Heart left ventricle (tissue), 16 donors: ENCODE measurements at regions of chr13 and their contacts with region 1.

Region 1: DNA sequence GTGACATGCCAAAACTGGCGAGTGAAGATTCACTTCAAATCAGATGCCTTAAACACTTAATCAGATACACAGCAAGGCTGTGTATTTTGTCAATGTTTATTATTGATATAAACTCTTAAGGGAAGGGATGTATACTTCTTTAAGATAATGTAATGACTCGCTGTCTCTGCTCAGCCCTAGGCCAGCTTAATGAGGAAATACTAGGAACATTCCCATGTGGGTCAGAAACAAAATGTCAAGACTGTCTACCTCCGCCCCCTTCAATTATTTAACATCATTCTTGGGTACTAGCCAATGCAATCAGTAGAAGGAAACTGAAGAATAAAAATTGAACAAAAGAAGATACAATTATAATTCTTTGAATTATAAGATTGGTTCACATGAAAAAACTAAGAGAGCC is 33.9 kb upstream of the SERPINE3 start:
- DNase-seq: no peak
- ATAC-seq: no peak
- H3K4me3 ChIP-seq: no peak overlapping the region
- H3K27ac ChIP-seq: no peak overlapping the region
- H3K4me1 ChIP-seq: no peaks in the 10 kb centered on the region
- H3K27me3 ChIP-seq: no peaks in the 10 kb centered on the region
- CTCF ChIP-seq: no peak
- POLR2A ChIP-seq: no peak

Region 2: GRCh38 chr13:50387051-50387581 is 918.5 kb before region 1 on chr13:
- intact Hi-C with region 1: no loop called
- DNase-seq: peak; percentile 61 to 77 (median 68)
- ATAC-seq: peak; percentile 89 to 96 (median 95)
- H3K4me3 ChIP-seq: peak overlapping the region in 10 of 12 donors; percentile 10 to 50 (median 37)
- H3K27ac ChIP-seq: peak overlapping the region in 11 of 12 donors; percentile 33 to 86 (median 69)
- H3K4me1 ChIP-seq: peaks cover 0 to 20% (median 2%) of the 10 kb centered on the region in 12 donors
- H3K27me3 ChIP-seq: no peaks in the 10 kb centered on the region
- CTCF ChIP-seq: peak in 11 of 12 donors; percentile 8 to 53 (median 23)
- POLR2A ChIP-seq: no peak

Region 3: GRCh38 chr13:51764184-51765141 is 458.9 kb after region 1 on chr13:
- intact Hi-C with region 1: loop called in 1 of 10 experiments (anchors 5 kb)
- DNase-seq: peak; percentile 65 to 83 (median 72)
- ATAC-seq: peak; percentile 81 to 93 (median 86)
- H3K4me3 ChIP-seq: peak overlapping the region in 3 of 12 donors; percentile 5 to 26 (median 21)
- H3K27ac ChIP-seq: peak overlapping the region; percentile 39 to 92 (median 72)
- H3K4me1 ChIP-seq: peaks cover 0 to 35% (median 29%) of the 10 kb centered on the region in 12 donors
- H3K27me3 ChIP-seq: no peaks in the 10 kb centered on the region
- CTCF ChIP-seq: peak in 1 of 12 donors; percentile 14
- POLR2A ChIP-seq: no peak